PC-9 (cell line): ENCODE measurements at regions of chr3 and their contacts with region 1.

Region 1: GRCh38 chr3:100020876-100021644 is 93.2 kb downstream of the FILIP1L start:
- DNase-seq: no peak
- H3K4me3 ChIP-seq: no peak overlapping the region
- H3K27ac ChIP-seq: no peak overlapping the region
- H3K4me1 ChIP-seq: no peaks in the 10 kb centered on the region
- H3K27me3 ChIP-seq: no peaks in the 10 kb centered on the region
- CTCF ChIP-seq: no peak

Region 2: GRCh38 chr3:100008081-100008698 is 12.9 kb before region 1 on chr3:
- CTCF ChIA-PET with region 1: interaction called, 12 read pairs
- POLR2A ChIA-PET with region 1: no interaction called
- intact Hi-C with region 1: no loop called
- DNase-seq: no peak
- H3K4me3 ChIP-seq: no peak overlapping the region
- H3K27ac ChIP-seq: no peak overlapping the region
- H3K4me1 ChIP-seq: peaks cover 34% of the 10 kb centered on the region
- H3K27me3 ChIP-seq: no peaks in the 10 kb centered on the region
- CTCF ChIP-seq: no peak